Vagina (tissue), 2 donors: ENCODE measurements at regions of chr10 and their contacts with region 1.

Region 1: GRCh38 chr10:24724381-24725228 is 918 bp upstream of the ARHGAP21 start:
- DNase-seq: peak in 1 of 2 donors; percentile 99
- H3K4me3 ChIP-seq: peak overlapping the region; percentile 85 to 89
- H3K27ac ChIP-seq: peak overlapping the region; percentile 95
- H3K4me1 ChIP-seq: peaks cover 29% of the 10 kb centered on the region
- H3K27me3 ChIP-seq: no peaks in the 10 kb centered on the region
- CTCF ChIP-seq: peak in 1 of 3 experiments; percentile 24
- POLR2A ChIP-seq: peak in 1 of 2 donors; percentile 94

Region 2: GRCh38 chr10:24518981-24519597 is 205.5 kb before region 1 on chr10:
- intact Hi-C with region 1: no loop called
- DNase-seq: no peak
- H3K4me3 ChIP-seq: no peak overlapping the region
- H3K27ac ChIP-seq: no peak overlapping the region
- H3K4me1 ChIP-seq: no peaks in the 10 kb centered on the region
- H3K27me3 ChIP-seq: no peaks in the 10 kb centered on the region
- CTCF ChIP-seq: peak; percentile 47 to 84 (median 70)
- POLR2A ChIP-seq: no peak

Region 3: DNA sequence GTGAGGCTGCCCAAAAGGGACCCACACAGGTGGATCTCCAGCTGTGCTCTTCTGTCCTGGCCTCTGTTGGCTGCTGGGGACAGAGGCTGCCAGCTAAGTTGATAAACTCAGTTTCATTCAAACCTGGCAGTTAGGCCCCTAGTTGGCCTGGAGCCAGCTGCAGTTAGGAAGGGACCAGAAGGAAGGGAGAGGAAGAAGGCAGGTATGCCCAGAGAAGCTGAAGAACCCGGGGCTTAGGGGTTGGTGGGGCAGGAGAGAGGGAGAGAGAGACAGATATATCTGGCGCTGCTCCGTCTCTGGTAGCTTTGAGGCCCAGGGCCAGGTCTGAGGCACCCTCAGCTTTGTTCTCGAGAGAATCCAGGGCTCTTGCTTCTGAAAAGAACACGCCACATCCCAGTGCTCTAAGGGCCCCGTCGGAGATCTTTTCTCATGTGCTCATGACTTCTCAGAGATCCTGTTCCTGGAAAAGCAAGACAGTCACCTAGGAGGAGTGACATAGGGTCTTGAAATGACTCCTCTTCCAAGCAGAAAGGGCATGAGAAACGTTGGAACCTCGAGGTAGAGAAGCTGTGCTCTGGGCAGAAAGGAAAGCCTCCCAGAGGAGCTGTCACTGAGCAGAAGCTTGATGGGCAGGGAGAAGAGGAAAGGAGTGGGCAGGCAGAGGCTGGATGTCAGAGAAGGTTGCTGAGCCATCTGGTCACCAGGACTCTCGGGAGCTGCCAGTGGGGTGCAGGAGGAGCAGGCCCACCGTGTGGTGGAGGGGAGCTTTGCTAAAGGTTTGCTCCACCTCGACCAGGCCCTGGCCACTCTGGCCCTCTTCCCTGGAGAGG is 154.6 kb before region 1 on chr10:
- intact Hi-C with region 1: no loop called
- DNase-seq: no peak
- H3K4me3 ChIP-seq: no peak overlapping the region
- H3K27ac ChIP-seq: no peak overlapping the region
- H3K4me1 ChIP-seq: no peaks in the 10 kb centered on the region
- H3K27me3 ChIP-seq: no peaks in the 10 kb centered on the region
- CTCF ChIP-seq: no peak
- POLR2A ChIP-seq: no peak

Region 4: GRCh38 chr10:24751716-24752115 is 27.1 kb after region 1 on chr10:
- intact Hi-C with region 1: no loop called
- DNase-seq: no peak
- H3K4me3 ChIP-seq: no peak overlapping the region
- H3K27ac ChIP-seq: no peak overlapping the region
- H3K4me1 ChIP-seq: no peaks in the 10 kb centered on the region
- H3K27me3 ChIP-seq: no peaks in the 10 kb centered on the region
- CTCF ChIP-seq: no peak
- POLR2A ChIP-seq: no peak

Region 5: GRCh38 chr10:24952707-24953645 is 228.4 kb after region 1 on chr10:
- intact Hi-C with region 1: loop called (anchors 2 kb)
- DNase-seq: no peak
- H3K4me3 ChIP-seq: peak overlapping the region; percentile 67 to 84
- H3K27ac ChIP-seq: peak overlapping the region; percentile 90
- H3K4me1 ChIP-seq: peaks cover 37% of the 10 kb centered on the region
- H3K27me3 ChIP-seq: no peaks in the 10 kb centered on the region
- CTCF ChIP-seq: peak in 1 of 3 experiments; percentile 29
- POLR2A ChIP-seq: no peak

Region 6: DNA sequence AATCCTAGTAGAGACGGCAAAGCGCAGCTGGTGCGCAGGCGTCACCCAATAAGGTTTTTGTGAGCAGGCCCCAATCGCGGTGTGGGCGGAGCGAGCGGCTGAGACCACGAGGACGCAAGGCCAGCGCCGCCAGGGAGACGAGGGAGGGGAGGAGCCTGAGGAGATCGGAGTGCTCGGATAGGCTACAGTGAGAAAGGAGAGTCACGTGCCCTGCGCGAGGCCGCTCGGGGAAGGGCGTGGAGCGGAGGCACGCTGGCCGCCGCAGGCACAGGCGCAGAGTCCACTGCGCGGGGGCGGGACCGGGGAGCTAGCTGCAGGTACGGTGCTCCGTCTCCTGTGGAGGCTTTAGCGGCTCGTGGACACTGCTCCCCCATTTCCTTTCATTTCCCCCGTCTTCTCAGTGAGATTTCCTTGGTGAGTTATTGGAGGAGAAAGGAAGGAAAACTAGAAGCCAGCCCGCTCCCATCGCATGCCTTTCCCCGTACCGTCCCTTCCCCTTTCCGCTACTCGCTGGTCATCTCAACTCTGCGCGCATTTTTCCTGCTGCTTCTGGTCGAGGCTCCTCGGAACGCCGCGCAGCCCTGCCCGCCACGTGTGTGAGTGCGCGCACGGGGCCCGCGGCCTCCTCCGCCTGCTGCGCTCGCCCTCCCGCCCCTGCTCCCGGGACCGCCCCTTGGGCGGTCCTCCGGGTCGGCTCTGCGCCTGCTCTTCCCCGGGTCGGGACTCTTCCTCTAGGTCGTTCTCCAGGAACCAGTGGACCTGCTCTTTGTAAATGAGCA is 292.0 kb after region 1 on chr10 and contains the start of gene THNSL1:
- intact Hi-C with region 1: loop called (anchors 10 kb)
- DNase-seq: peak; percentile 97 to 99
- H3K4me3 ChIP-seq: peak within 1 kb of the TSS; percentile 73 to 82
- H3K27ac ChIP-seq: peak within 1 kb of the TSS; percentile 90
- H3K4me1 ChIP-seq: peaks cover 16% of the 10 kb centered on the region
- H3K27me3 ChIP-seq: no peaks in the 10 kb centered on the region
- CTCF ChIP-seq: no peak
- POLR2A ChIP-seq: peak in 1 of 2 donors; percentile 60
- total RNA-seq, gene THNSL1: 2.0 TPM